ENCODE measurements at regions of chr16 and their contacts with region 1.

Region 1: GRCh38 chr16:86575754-86576557 is 2.4 kb upstream of the FOXL1 start:
- DNase-seq: peak; percentile 32
- H3K4me3 Mint-ChIP-seq: peak overlapping the region; percentile 75
- H3K27ac Mint-ChIP-seq: no peak overlapping the region
- H3K4me1 Mint-ChIP-seq: peaks cover 5% of the 10 kb centered on the region
- H3K27me3 Mint-ChIP-seq: peaks cover 62% of the 10 kb centered on the region

Region 2: DNA sequence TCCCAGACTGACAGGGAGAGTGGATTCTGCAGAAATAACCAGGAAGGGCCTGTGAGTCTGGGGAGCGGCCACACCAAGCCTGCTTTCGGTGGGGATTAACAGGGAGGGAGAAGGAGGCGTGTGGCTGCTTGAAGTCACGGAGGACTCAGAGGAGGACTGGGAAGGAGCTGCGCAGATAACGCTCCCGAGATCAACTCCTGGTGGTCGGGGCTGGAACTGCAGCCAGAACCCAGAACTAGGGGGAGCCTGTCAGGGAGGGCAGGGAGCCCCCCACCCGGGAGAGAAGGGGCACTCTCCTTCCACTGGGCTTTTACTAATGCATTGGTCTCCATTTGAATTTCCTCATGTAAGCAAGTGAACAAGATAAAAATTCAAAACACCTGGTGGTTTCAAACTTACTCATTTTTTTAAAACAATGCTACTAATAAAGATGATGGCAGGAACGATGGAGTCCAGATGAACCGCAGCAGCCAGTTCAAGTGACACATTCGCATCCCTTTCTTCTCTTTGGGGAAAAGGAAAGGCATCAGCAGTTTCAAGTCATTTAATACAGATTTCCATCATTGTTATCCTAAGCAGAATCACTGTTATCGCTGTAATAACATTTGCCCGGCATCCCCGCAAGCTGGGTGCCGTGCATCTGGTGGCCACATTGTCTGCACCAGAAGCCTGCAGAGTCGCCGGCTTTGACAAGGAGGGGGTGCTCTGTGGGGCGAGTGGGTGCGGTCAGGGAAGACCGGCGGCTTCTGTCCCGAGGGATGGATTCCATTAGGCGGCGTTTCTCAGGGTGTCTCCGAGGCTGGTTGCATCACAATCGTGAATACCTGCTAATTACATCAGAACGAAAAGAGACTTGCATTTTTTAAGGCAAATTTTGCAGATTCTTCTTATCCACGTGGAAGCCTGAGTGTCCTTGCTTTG is 185.4 kb after region 1 on chr16:
- intact Hi-C with region 1: loop called (anchors 1 kb)
- DNase-seq: peak; percentile 38
- H3K4me3 Mint-ChIP-seq: no peak overlapping the region
- H3K27ac Mint-ChIP-seq: no peak overlapping the region
- H3K4me1 Mint-ChIP-seq: peaks cover 6% of the 10 kb centered on the region
- H3K27me3 Mint-ChIP-seq: peaks cover 23% of the 10 kb centered on the region

Region 3: DNA sequence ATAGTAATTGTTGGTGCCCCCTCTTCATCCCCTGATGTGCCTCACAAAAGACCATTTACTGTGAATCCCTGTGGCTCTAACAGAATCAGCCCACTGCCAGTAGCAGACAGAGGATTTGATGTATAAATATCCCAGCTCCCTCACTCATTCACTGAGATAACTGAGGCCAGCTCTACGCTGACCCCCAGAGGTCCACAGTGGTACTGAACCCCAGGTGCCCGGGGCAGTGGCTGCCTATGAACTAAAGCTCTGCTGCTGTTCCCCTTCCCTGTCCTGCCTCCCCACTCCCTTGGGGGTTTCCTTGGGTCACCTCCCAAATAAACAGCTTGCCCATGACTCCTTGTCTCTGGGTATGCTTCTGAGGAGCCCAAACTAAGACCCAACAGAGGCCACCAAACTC is 298.2 kb after region 1 on chr16:
- intact Hi-C with region 1: loop called (anchors 5 kb)
- DNase-seq: peak; percentile 8
- H3K4me3 Mint-ChIP-seq: no peak overlapping the region
- H3K27ac Mint-ChIP-seq: no peak overlapping the region
- H3K4me1 Mint-ChIP-seq: no peaks in the 10 kb centered on the region
- H3K27me3 Mint-ChIP-seq: peaks cover 22% of the 10 kb centered on the region

Region 4: DNA sequence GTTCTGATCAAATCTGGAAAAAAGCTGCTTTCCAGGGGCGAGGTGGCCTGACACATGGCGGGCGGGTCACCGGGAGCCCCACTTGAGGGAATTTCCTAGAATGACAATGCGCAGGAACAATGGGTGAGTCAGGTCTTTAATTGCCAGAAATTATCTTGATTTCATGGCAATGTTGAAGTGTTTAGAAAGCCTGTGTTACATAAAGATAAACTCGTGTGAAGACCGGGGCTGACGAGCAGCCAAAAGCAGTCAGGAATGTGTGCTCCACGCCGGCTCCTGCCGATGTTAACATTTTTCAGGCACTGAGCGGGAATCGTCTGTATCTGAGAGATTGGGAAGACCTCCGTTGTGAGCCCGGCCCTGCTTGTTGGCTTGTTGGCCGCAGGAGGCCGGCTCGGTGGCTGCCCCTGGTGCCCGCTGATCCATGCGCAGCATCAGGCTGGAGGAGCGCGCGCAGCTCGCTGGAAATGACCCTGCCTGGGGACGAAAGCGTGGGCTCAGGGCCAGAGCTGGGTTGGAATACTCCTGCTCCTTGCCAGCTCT is 355.5 kb after region 1 on chr16:
- intact Hi-C with region 1: no loop called
- DNase-seq: no peak
- H3K4me3 Mint-ChIP-seq: no peak overlapping the region
- H3K27ac Mint-ChIP-seq: no peak overlapping the region
- H3K4me1 Mint-ChIP-seq: no peaks in the 10 kb centered on the region
- H3K27me3 Mint-ChIP-seq: peaks cover 27% of the 10 kb centered on the region

Measured in activated T-helper 1 cell treated with anti-CD3 and anti-CD28 coated beads, Interleukin-12 subunit alpha, Interleukin-12 subunit beta, Interleukin-2, Interleukin-4 antibody, amounts not matched to agents 30 ng/mL and 10 ng/mL and 1 ng/mL, durations not matched to agents 14 hours and 24 hours and 36 hours (primary cell).